Tibial artery (tissue), 4 donors: ENCODE measurements at regions of chr15 and their contacts with region 1.

Region 1: GRCh38 chr15:43285609-43286037 is 18.9 kb upstream of the TGM5 start:
- DNase-seq: peak in 1 of 2 donors; percentile 49
- H3K4me3 ChIP-seq: no peak overlapping the region
- H3K27ac ChIP-seq: no peak overlapping the region
- H3K4me1 ChIP-seq: no peaks in the 10 kb centered on the region
- H3K27me3 ChIP-seq: peaks cover 0 to 13% of the 10 kb centered on the region in 2 donors
- CTCF ChIP-seq: peak; percentile 79 to 82

Region 2: GRCh38 chr15:43190178-43190577 is 95.4 kb before region 1 on chr15:
- intact Hi-C with region 1: loop called (anchors 10 kb)
- DNase-seq: no peak
- H3K4me3 ChIP-seq: no peak overlapping the region
- H3K27ac ChIP-seq: no peak overlapping the region
- H3K4me1 ChIP-seq: peaks cover 0 to 32% (median 17%) of the 10 kb centered on the region in 4 donors
- H3K27me3 ChIP-seq: no peaks in the 10 kb centered on the region
- CTCF ChIP-seq: no peak

Region 3: DNA sequence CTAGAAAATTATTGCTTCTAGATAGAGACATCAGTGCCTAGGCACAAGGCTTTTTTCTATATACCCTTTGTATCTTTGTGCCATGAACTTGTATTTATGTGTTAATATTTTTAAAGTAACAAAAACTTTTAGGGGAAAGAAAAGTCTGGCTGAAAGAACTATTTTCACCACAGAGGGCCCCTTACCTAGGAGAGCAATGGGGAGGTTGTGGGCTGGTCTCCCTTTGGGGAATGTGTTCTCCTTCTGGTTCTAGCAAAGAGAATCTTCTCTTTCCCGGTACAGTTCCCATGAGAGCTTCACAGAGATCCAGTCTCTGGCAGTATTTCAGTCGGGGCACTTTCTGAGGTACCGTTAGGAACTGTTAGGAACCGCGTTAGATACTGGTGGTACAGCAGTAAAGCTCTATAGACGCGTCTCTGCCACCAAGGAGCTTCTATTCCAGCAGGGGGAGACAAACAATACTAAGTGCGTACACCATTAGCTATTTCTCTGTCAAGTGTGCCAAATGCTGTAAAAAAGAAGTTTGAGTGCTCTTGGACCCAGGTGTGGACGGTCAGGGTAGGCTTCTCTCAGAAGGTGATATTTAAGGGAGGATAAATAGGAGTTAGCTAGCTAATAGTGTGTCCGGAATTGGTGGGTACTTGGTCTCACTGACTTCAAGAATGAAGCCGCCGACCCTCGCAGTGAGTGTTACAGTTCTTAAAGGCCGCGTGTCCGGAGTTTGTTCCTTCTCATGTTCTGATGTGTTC is 60.2 kb before region 1 on chr15:
- intact Hi-C with region 1: loop called (anchors 5 kb)
- DNase-seq: peak in 1 of 2 donors; percentile 42
- H3K4me3 ChIP-seq: no peak overlapping the region
- H3K27ac ChIP-seq: no peak overlapping the region
- H3K4me1 ChIP-seq: no peaks in the 10 kb centered on the region
- H3K27me3 ChIP-seq: peaks cover 0 to 2% of the 10 kb centered on the region in 2 donors
- CTCF ChIP-seq: peak; percentile 70 to 76